Naive thymus-derived CD8-positive, alpha-beta T cell (primary cell): ENCODE measurements at regions of chr2 and their contacts with region 1.

Region 1: GRCh38 chr2:201231781-201232466 is 28.4 kb upstream of the CASP8 start:
- DNase-seq: peak; percentile 82 to 95 (median 90)
- ATAC-seq: peak; percentile 49 to 56
- H3K4me3 Mint-ChIP-seq: peak overlapping the region; percentile 44 to 99 (median 93)
- H3K27ac Mint-ChIP-seq: peak overlapping the region; percentile 60 to 98 (median 89)
- H3K4me1 Mint-ChIP-seq: peaks cover 14 to 70% (median 43%) of the 10 kb centered on the region in 4 donors
- H3K27me3 Mint-ChIP-seq: no peaks in the 10 kb centered on the region

Region 2: DNA sequence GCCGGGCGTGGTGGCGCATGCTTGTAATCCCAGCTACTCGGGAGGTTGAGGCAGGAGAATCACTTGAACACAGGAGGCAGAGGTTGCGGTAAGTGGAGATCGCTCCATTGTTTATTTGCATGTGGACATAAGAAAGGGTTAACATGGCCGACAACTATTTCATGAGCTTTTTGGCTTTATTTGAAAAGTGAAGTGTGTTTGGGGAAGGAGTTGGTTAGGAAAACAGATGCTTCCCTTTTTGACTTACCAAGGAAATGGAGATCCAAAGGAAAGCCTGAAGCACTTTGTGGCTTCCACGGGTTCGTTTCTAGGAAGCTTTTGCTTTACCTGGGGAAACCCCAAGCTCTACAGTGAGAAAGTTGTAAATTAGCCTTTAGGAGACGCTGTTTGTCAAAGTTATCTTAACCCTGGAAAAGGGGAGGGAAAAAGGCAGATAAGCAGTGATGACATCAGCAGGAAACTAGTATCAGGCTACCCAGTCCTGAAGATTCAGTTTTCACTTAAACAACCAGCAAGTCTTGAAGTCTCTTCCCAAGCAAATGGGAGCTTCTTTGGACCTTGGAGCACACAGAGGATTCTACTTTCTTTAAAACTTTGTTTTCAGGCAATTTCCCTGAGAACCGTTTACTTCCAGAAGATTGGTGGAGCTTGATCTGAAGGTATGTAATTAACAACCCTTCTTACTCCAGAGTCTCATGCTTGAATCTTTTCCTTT is 49.1 kb before region 1 on chr2 and contains the start of gene CASP10:
- POLR2A ChIA-PET with region 1: interaction called, 88 read pairs
- DNase-seq: peak in 6 of 10 donors; percentile 6 to 80 (median 50)
- ATAC-seq: peak; percentile 83 to 87
- H3K4me3 Mint-ChIP-seq: peak within 1 kb of the TSS; percentile 94 to 99 (median 98)
- H3K27ac Mint-ChIP-seq: peak within 1 kb of the TSS; percentile 85 to 97 (median 96)
- H3K4me1 Mint-ChIP-seq: peaks cover 15 to 47% (median 37%) of the 10 kb centered on the region in 4 donors
- H3K27me3 Mint-ChIP-seq: no peaks in the 10 kb centered on the region
- polyA plus RNA-seq, gene CASP10: 8.6 to 17.5 (median 14.6) TPM

Region 3: GRCh38 chr2:201194097-201194496 is 37.8 kb before region 1 on chr2:
- POLR2A ChIA-PET with region 1: interaction called, 20 read pairs
- DNase-seq: peak in 3 of 10 donors; percentile 24 to 38 (median 34)
- ATAC-seq: peak; percentile 27 to 61
- H3K4me3 Mint-ChIP-seq: peak overlapping the region; percentile 21 to 81 (median 74)
- H3K27ac Mint-ChIP-seq: peak overlapping the region; percentile 70 to 95 (median 88)
- H3K4me1 Mint-ChIP-seq: peaks cover 28 to 84% (median 70%) of the 10 kb centered on the region in 4 donors
- H3K27me3 Mint-ChIP-seq: no peaks in the 10 kb centered on the region

Region 4: GRCh38 chr2:201257956-201258665 is 26.2 kb after region 1 on chr2:
- POLR2A ChIA-PET with region 1: interaction called, 72 read pairs
- DNase-seq: peak; percentile 70 to 100 (median 96)
- ATAC-seq: peak; percentile 69 to 77
- H3K4me3 Mint-ChIP-seq: peak overlapping the region; percentile 83 to 100 (median 92)
- H3K27ac Mint-ChIP-seq: peak overlapping the region; percentile 92 to 100 (median 99)
- H3K4me1 Mint-ChIP-seq: peaks cover 40 to 85% (median 77%) of the 10 kb centered on the region in 4 donors
- H3K27me3 Mint-ChIP-seq: peaks cover 0 to 1% (median 0%) of the 10 kb centered on the region in 5 donors

Region 5: DNA sequence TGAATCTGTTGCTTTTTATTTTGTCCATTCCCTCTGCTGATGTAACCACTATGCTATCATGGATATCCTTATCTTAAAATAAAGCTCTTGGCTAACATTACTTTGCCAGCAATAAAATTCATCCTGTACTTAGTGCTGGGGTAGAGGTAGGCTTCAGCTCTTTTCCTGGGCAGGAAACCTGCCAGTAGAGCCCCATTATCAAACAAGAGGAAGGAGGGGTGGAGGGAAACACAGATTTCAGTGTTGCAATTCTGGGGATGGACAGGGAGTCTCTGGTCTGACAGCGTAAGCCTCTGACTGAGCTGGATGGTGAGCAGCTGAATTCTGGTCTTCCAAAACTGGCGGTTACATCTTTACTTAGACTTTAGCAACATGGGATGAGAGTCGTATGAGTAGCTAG is 76.0 kb after region 1 on chr2:
- POLR2A ChIA-PET with region 1: no interaction called
- DNase-seq: no peak
- ATAC-seq: no peak
- H3K4me3 Mint-ChIP-seq: no peak overlapping the region
- H3K27ac Mint-ChIP-seq: peak overlapping the region in 1 of 10 donors; percentile 74
- H3K4me1 Mint-ChIP-seq: peaks cover 0 to 2% (median 0%) of the 10 kb centered on the region in 4 donors
- H3K27me3 Mint-ChIP-seq: no peaks in the 10 kb centered on the region

Region 6: DNA sequence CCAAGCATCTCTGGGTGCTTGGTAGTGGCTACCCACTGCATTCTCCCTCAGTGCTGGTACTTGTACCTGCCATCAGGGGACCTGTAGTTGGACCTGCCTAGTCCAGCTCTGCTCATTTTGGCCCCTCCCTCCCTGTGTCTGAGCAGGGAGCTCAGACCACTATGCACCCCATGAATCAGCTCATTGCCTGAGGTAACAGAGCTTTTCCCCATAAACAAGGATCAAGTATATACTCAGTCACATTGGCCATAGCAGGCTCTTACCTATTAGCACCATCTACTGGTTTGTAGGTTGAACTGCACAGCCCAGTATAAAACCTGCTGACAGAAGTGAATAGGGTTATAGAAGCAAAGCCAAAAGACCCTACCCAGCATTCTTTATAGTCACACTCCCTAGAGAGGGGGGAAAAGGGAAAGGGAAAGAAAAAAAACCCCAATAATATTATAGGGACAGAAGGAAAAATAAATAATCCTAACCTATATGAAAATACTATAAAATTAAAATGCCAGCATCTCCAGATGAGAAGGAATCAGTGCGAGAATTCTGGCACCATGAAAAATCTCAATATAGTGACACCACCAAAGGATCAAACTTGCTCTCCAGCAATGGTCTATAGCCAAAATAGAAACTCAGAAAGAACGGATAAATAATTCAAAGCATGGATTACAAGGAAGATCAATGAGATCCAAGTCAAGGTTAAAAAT is 132.1 kb after region 1 on chr2:
- POLR2A ChIA-PET with region 1: interaction called, 14 read pairs
- DNase-seq: peak in 8 of 10 donors; percentile 11 to 67 (median 50)
- ATAC-seq: peak; percentile 91 to 92
- H3K4me3 Mint-ChIP-seq: peak overlapping the region in 5 of 10 donors; percentile 26 to 65 (median 49)
- H3K27ac Mint-ChIP-seq: peak overlapping the region in 7 of 10 donors; percentile 6 to 92 (median 56)
- H3K4me1 Mint-ChIP-seq: peaks cover 9 to 39% (median 32%) of the 10 kb centered on the region in 4 donors
- H3K27me3 Mint-ChIP-seq: no peaks in the 10 kb centered on the region

Region 7: GRCh38 chr2:201451292-201452057 is 219.6 kb after region 1 on chr2 and contains the starts of genes STRADB and TRAK2:
- POLR2A ChIA-PET with region 1: interaction called, 10 read pairs
- DNase-seq: peak; percentile 90 to 97 (median 94)
- ATAC-seq: peak; percentile 85 to 87
- H3K4me3 Mint-ChIP-seq: peak within 1 kb of the TSS; percentile 67 to 98 (median 95)
- H3K27ac Mint-ChIP-seq: peak within 1 kb of the TSS; percentile 84 to 98 (median 96)
- H3K4me1 Mint-ChIP-seq: peaks cover 19 to 57% (median 50%) of the 10 kb centered on the region in 4 donors
- H3K27me3 Mint-ChIP-seq: no peaks in the 10 kb centered on the region
- polyA plus RNA-seq, gene STRADB: 31.5 to 33.8 (median 33.5) TPM
- polyA plus RNA-seq, gene TRAK2: 20.9 to 30.7 (median 24.7) TPM